CD4-positive, alpha-beta memory T cell (primary cell): ENCODE measurements at regions of chr21 and their contacts with region 1.

Region 1: DNA sequence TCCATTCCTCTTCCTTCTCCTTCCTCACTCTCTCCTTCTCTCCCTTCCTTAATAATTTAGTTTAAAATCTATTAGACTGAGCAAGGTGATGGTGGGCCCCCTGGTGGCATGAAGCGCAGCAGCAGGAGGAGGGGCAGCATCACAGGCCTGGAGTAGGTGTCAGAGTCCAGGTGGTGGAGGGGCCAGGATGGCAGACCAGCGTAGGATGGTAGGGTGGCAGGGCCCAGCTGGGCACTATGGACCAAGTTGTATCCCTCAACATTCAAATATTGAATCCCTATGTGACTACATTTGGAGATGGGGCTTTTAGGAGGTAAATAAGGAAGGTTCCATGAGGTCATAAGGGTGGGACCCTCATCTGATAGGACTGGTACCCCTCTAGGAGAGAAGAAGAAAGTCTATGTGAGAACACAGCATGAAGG is 61.0 kb downstream of the WDR4 start:
- DNase-seq: peak in 4 of 5 donors; percentile 54 to 62 (median 58)
- H3K4me3 ChIP-seq: no peak overlapping the region
- H3K4me3 Mint-ChIP-seq: no peak overlapping the region
- H3K27ac ChIP-seq: no peak overlapping the region
- H3K27ac Mint-ChIP-seq: peak overlapping the region in 1 of 7 donors; percentile 79
- H3K4me1 ChIP-seq: no peaks in the 10 kb centered on the region
- H3K4me1 Mint-ChIP-seq: peaks cover 0 to 2% (median under 1%) of the 10 kb centered on the region in 4 donors
- H3K27me3 ChIP-seq: no peaks in the 10 kb centered on the region
- H3K27me3 Mint-ChIP-seq: peaks cover 5% of the 10 kb centered on the region in 2 donors

Region 2: GRCh38 chr21:42593007-42593806 is 225.1 kb before region 1 on chr21:
- CTCF ChIA-PET with region 1: interaction called, 76 read pairs
- POLR2A ChIA-PET with region 1: no interaction called
- intact Hi-C with region 1: loop called (anchors 1 kb)
- DNase-seq: peak; percentile 52 to 68 (median 66)
- H3K4me3 ChIP-seq: no peak overlapping the region
- H3K4me3 Mint-ChIP-seq: no peak overlapping the region
- H3K27ac ChIP-seq: no peak overlapping the region
- H3K27ac Mint-ChIP-seq: peak overlapping the region in 1 of 7 donors; percentile 57
- H3K4me1 ChIP-seq: peaks cover 14% of the 10 kb centered on the region
- H3K4me1 Mint-ChIP-seq: peaks cover 0 to 9% (median 6%) of the 10 kb centered on the region in 4 donors
- H3K27me3 ChIP-seq: no peaks in the 10 kb centered on the region
- H3K27me3 Mint-ChIP-seq: peaks cover 0 to 2% of the 10 kb centered on the region in 2 donors

Region 3: GRCh38 chr21:42652527-42653230 is 165.7 kb before region 1 on chr21:
- CTCF ChIA-PET with region 1: interaction called, 34 read pairs
- POLR2A ChIA-PET with region 1: interaction called, 3 read pairs
- intact Hi-C with region 1: loop called (anchors 1 kb)
- DNase-seq: no peak
- H3K4me3 ChIP-seq: no peak overlapping the region
- H3K4me3 Mint-ChIP-seq: peak overlapping the region; percentile 41 to 93 (median 75)
- H3K27ac ChIP-seq: no peak overlapping the region
- H3K27ac Mint-ChIP-seq: peak overlapping the region in 5 of 7 donors; percentile 22 to 61 (median 46)
- H3K4me1 ChIP-seq: peaks cover 20% of the 10 kb centered on the region
- H3K4me1 Mint-ChIP-seq: peaks cover 7 to 39% (median 14%) of the 10 kb centered on the region in 4 donors
- H3K27me3 ChIP-seq: peaks cover 12% of the 10 kb centered on the region
- H3K27me3 Mint-ChIP-seq: peaks cover 4 to 5% of the 10 kb centered on the region in 2 donors

Region 4: GRCh38 chr21:42684109-42684916 is 134.0 kb before region 1 on chr21:
- CTCF ChIA-PET with region 1: interaction called, 6 read pairs
- POLR2A ChIA-PET with region 1: no interaction called
- intact Hi-C with region 1: loop called (anchors 10 kb)
- DNase-seq: peak; percentile 52 to 74 (median 62)
- H3K4me3 ChIP-seq: peak overlapping the region; percentile 39 to 51
- H3K4me3 Mint-ChIP-seq: peak overlapping the region; percentile 74 to 90 (median 84)
- H3K27ac ChIP-seq: peak overlapping the region; percentile 19
- H3K27ac Mint-ChIP-seq: peak overlapping the region; percentile 86 to 95 (median 91)
- H3K4me1 ChIP-seq: peaks cover 46% of the 10 kb centered on the region
- H3K4me1 Mint-ChIP-seq: peaks cover 27 to 54% (median 37%) of the 10 kb centered on the region in 4 donors
- H3K27me3 ChIP-seq: no peaks in the 10 kb centered on the region
- H3K27me3 Mint-ChIP-seq: no peaks in the 10 kb centered on the region

Region 5: DNA sequence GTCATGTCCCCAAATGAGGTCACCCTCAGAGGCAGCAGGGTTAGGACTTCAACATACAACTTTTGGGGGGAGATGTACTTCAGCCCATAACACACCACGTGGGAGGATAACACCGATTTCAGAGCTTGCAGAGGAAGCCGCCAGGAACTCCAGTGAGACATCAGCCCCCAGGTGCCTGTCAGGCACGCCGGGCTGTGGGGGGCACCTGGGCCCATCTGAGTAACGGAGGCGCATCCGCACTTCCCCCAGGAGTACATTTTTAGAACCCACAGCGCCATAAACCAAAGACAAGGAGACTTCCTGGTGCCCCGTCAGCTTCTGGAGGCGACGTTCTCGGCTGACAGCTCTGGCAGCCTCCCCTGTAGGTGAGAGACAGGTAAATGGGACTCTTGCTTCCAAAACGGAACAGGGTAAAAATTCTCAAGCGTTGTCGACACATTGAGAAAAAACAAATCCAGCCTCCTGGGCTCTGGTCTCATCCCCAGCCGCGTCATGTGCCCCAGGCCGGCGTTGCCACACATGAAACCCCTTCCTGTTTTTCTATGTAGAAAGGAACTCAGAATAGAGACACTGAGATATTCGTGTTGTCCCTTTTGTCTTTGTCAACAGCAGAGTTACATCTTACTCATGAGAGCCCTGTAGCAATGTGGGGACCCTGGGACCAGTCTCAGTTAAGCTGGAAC is 71.6 kb before region 1 on chr21:
- CTCF ChIA-PET with region 1: interaction called, 5 read pairs
- POLR2A ChIA-PET with region 1: no interaction called
- intact Hi-C with region 1: loop called (anchors 2 kb)
- DNase-seq: peak; percentile 62 to 75 (median 67)
- H3K4me3 ChIP-seq: peak overlapping the region in 1 of 2 donors; percentile 5
- H3K4me3 Mint-ChIP-seq: peak overlapping the region; percentile 69 to 88 (median 76)
- H3K27ac ChIP-seq: peak overlapping the region; percentile 54
- H3K27ac Mint-ChIP-seq: peak overlapping the region; percentile 84 to 99 (median 96)
- H3K4me1 ChIP-seq: peaks cover 29% of the 10 kb centered on the region
- H3K4me1 Mint-ChIP-seq: peaks cover 9 to 38% (median 28%) of the 10 kb centered on the region in 4 donors
- H3K27me3 ChIP-seq: no peaks in the 10 kb centered on the region
- H3K27me3 Mint-ChIP-seq: no peaks in the 10 kb centered on the region

Region 6: DNA sequence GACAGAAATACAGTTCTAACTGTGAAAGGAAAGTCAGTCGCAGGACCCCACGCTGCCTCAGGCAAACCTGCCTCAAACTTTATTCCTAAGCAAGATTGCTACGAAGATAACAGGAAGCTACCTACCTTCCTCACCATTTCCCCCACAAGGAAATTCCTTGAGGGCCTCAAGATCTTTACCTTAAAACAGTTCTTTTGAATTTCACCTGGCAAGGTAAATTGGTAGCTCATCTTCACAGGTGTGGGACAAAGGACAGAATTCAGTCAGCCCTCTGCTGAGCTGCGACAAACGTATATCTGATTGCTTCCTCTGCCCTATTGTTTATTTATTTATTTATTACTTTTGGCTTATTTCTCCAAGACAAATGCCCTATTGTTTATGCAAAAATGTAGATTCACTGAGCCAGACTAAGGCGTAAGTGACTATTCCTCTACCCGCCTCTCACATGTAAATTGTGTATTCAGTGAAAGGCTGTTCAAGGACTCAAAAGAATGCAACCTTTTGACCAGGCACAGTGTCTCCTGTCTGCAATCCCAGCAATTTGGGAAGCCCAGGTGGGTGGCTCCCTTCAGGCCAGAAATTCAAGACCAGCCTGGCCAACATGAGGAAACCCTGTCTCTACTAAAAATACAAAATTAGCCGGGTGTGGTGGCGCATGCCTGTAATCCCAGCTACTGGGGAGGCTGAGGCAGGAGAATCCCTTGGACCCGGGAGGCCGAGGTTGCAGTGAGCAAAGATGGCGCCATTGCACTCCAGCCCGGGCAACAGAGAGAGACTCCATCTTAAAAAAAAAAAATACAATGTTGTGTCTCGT is 138.7 kb after region 1 on chr21:
- CTCF ChIA-PET with region 1: no interaction called
- POLR2A ChIA-PET with region 1: no interaction called
- intact Hi-C with region 1: no loop called
- DNase-seq: no peak
- H3K4me3 ChIP-seq: no peak overlapping the region
- H3K4me3 Mint-ChIP-seq: no peak overlapping the region
- H3K27ac ChIP-seq: no peak overlapping the region
- H3K27ac Mint-ChIP-seq: no peak overlapping the region
- H3K4me1 ChIP-seq: no peaks in the 10 kb centered on the region
- H3K4me1 Mint-ChIP-seq: peaks cover 0 to 4% (median 0%) of the 10 kb centered on the region in 4 donors
- H3K27me3 ChIP-seq: no peaks in the 10 kb centered on the region
- H3K27me3 Mint-ChIP-seq: peaks cover 0 to 5% of the 10 kb centered on the region in 2 donors

Region 7: DNA sequence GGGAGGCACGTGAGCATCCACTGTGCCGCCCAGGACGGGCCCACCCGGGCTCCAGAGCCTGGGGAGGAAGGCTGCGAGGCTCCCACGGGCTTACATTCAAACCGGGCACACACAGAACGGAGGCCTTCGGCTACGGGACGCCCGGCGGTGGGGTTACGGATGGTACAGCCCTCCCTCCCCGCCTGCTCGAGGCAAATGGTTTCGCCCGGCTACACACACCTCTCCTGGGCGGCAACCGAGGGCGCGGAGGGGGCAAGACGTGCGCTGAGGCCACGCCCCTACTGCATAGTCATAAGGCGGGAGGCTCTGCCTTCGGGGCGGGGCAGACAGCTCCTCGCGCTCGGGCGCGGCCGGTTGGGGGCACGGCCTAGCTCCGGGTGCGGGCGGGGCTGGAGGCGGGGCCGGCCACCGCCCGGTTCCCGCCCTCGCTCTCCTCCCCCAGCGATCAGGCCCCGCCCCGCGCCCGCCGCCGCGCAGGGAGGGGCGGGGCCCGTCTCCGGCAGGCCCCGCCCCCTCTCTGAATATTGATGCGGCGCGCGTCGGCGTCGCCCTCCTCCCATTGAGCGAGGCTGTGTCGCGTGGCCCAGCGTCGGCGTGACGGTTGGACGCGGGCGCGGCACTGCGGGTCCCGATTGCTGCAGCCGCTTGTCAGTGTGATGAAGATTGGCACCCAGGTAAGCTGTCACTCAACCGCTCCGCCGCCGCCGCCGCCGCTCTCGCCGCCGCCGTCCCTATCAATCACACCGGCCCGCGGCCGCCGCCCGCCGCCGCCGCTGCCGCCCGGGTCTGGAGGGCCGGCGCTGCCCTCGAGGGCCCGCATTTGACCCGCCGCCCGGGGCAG is 155.9 kb after region 1 on chr21 and contains the start of gene PKNOX1:
- CTCF ChIA-PET with region 1: no interaction called
- POLR2A ChIA-PET with region 1: no interaction called
- intact Hi-C with region 1: no loop called
- DNase-seq: peak; percentile 99 to 100 (median 99)
- H3K4me3 ChIP-seq: peak within 1 kb of the TSS; percentile 70 to 94
- H3K4me3 Mint-ChIP-seq: peak within 1 kb of the TSS; percentile 84 to 95 (median 90)
- H3K27ac ChIP-seq: peak within 1 kb of the TSS; percentile 91
- H3K27ac Mint-ChIP-seq: peak within 1 kb of the TSS; percentile 91 to 98 (median 93)
- H3K4me1 ChIP-seq: peaks cover 25% of the 10 kb centered on the region
- H3K4me1 Mint-ChIP-seq: peaks cover 16 to 42% (median 30%) of the 10 kb centered on the region in 4 donors
- H3K27me3 ChIP-seq: no peaks in the 10 kb centered on the region
- H3K27me3 Mint-ChIP-seq: no peaks in the 10 kb centered on the region
- total RNA-seq, gene PKNOX1: 21.5 to 24.8 TPM